PC-3 (cell line): ENCODE measurements at regions of chr9 and their contacts with region 1.

Region 1: DNA sequence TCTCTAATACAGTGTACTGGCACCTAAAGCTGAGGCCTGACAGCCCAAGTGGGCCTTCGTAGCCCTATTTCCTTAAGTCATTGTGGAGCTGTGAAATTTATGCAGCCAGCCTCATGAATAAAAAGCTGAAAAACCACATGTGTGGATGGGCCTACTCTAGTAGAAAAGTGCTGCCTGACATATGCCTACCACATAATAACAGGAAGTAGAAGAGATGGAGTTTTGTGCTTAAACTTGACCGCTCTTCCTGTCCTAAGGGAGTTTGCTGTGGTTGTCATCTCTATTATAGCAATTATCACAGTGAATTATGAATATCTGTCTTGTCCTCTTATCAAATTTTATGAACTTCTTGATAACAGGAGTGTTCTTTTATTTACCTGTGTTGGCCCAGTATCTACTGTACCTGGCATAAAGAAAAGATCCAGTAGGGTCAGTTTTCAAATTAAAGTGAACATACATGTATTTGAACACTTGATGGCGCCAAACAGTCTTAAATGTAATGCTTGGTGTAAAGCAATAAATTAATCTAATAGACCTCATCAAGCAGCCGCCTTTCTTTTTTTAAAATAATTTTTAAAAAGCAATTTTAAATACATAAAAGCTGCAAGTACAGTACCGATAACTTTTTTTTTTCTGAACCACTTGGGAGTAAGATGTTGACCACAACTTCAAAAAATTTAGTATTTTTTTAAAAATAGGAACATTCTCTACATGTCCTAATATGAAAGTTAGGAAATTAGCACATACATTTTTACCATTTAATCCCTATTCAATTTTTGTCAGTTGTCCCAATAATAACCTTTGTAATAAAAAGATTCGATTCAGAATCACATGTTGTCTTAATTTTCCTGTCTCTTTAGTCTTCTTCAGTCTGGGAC is 51.0 kb downstream of the FKTN start:
- DNase-seq: peak; percentile 55
- ATAC-seq: peak; percentile 38; the same call in 1 of the 2 replicates
- H3K4me3 ChIP-seq: no peak overlapping the region
- H3K27ac ChIP-seq: no peak overlapping the region
- H3K4me1 ChIP-seq: no peaks in the 10 kb centered on the region
- H3K27me3 ChIP-seq: no peaks in the 10 kb centered on the region
- CTCF ChIP-seq: peak; percentile 63

Region 2: DNA sequence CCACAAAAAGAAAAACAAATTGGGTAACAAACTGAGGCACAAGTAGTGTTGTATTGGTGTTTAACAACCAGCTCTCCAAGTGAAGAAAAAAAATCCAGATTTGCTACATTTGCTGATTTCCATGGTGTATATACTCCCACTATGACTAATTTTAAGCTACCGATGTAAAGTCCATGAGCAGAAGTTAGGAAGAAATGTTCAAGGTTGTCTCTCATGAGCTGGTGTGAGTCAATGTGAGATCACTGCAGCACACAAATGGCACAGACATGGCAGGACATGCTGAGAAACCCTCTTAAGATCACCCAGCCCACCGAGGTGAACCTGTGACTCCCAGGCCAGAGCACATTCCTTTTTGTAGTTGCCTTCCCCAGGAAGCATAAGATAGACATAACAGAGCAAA is 328.3 kb before region 1 on chr9:
- CTCF ChIA-PET with region 1: no interaction called
- POLR2A ChIA-PET with region 1: no interaction called
- intact Hi-C with region 1: no loop called
- DNase-seq: peak; percentile 45
- ATAC-seq: peak; percentile 64
- H3K4me3 ChIP-seq: no peak overlapping the region
- H3K27ac ChIP-seq: 0 out of 2 replicates have a peak overlapping the region, but pooled peaks have one; percentile 24
- H3K4me1 ChIP-seq: peaks cover 20% of the 10 kb centered on the region
- H3K27me3 ChIP-seq: no peaks in the 10 kb centered on the region
- CTCF ChIP-seq: no peak

Region 3: GRCh38 chr9:105713260-105714019 is 104.5 kb after region 1 on chr9:
- CTCF ChIA-PET with region 1: no interaction called
- POLR2A ChIA-PET with region 1: no interaction called
- intact Hi-C with region 1: loop called (anchors 1 kb)
- DNase-seq: no peak
- ATAC-seq: no peak
- H3K4me3 ChIP-seq: no peak overlapping the region
- H3K27ac ChIP-seq: no peak overlapping the region
- H3K4me1 ChIP-seq: no peaks in the 10 kb centered on the region
- H3K27me3 ChIP-seq: no peaks in the 10 kb centered on the region
- CTCF ChIP-seq: no peak